BJ (cell line): ENCODE measurements at regions of chr20 and their contacts with region 1.

Region 1: GRCh38 chr20:58087193-58087858 is 141.1 kb downstream of the ANKRD60 start:
- DNase-seq: no peak
- H3K4me3 ChIP-seq: no peak overlapping the region
- H3K27me3 ChIP-seq: peaks cover 4% of the 10 kb centered on the region
- CTCF ChIP-seq: peak; percentile 96

Region 2: GRCh38 chr20:58073945-58074856 is 13.1 kb before region 1 on chr20:
- CTCF ChIA-PET with region 1: interaction called, 10 read pairs
- POLR2A ChIA-PET with region 1: no interaction called
- DNase-seq: no peak
- H3K4me3 ChIP-seq: no peak overlapping the region
- H3K27me3 ChIP-seq: peaks cover 3% of the 10 kb centered on the region; the same call in 1 of the 2 replicates
- CTCF ChIP-seq: no peak

Region 3: DNA sequence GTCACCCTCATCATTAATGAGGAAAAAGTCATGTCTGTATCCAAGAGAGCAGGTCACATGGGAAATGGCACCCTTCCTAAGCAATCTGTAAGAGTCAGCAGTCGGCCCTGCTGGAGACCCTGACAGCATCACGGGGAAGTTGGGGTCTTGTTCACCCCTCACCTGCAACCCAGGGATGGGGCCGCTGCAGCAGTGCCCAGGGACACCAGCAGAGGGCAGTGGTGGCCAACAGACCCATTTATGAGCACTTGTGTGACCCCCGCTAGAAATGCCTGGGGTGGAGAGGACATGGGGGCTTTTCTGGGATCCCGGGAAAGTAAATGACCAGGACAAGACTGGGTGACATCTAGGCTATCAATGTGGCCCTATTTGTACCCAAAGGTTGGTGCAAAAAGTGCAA is 105.2 kb after region 1 on chr20:
- CTCF ChIA-PET with region 1: no interaction called
- POLR2A ChIA-PET with region 1: no interaction called
- DNase-seq: no peak
- H3K4me3 ChIP-seq: no peak overlapping the region
- H3K27me3 ChIP-seq: peaks cover 2% of the 10 kb centered on the region; the same call in 1 of the 2 replicates
- CTCF ChIP-seq: peak; percentile 72